ENCODE measurements at regions of chr10 and their contacts with region 1.

Region 1: DNA sequence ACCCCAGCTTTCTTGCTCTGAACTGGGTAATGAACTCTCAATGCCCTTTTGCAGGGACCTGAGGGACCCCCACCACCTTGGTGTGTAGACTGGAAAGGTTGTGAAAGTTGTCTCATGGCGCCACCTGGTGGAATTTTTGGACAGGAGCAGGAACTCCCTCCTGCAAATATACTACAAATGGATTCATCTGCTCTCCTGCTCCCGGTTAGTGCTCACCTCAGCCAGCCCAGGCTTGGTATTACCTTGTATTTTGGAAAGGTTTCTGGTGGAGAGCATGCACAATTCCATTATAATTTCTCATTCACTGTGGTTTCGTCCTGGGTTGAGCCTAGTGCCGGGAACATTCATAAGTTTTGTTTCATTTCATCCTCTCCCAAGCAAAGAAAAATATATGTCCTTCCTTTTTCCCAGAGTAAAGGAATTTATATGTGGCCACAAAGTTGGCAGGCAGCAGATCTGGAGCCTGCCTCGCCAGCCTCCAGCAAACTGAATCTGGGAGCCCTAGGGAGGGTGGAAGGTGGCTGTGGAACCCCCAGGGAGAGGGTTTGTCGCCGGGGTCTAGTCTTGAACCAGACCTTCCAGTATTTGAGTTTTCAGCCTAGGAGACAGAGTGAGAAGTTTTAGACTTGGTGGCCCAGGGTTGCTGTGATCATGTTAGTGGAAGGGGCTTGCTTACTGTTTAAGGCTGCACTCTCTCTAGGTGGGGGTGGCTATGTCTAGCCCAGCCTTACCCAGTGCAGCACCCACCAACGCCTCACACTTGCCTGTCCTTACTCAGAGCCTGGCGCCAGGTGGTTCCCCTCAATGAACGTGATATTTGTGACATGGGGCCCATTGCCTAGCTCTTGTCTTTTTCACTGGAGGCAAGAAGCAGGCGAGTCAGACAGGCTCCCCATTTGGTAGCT is 9.5 kb downstream of the FAM241B start:
- DNase-seq: peak in 4 of 5 donors; percentile 46 to 56 (median 48)
- ATAC-seq: peak in 2 of 4 donors; percentile 60 to 68
- H3K4me3 ChIP-seq: no peak overlapping the region
- H3K27ac ChIP-seq: no peak overlapping the region
- H3K4me1 ChIP-seq: no peaks in the 10 kb centered on the region
- H3K27me3 ChIP-seq: peaks cover 0 to 13% (median 4%) of the 10 kb centered on the region in 9 donors
- CTCF ChIP-seq: peak; percentile 73 to 87 (median 85)
- POLR2A ChIP-seq: no peak

Region 2: DNA sequence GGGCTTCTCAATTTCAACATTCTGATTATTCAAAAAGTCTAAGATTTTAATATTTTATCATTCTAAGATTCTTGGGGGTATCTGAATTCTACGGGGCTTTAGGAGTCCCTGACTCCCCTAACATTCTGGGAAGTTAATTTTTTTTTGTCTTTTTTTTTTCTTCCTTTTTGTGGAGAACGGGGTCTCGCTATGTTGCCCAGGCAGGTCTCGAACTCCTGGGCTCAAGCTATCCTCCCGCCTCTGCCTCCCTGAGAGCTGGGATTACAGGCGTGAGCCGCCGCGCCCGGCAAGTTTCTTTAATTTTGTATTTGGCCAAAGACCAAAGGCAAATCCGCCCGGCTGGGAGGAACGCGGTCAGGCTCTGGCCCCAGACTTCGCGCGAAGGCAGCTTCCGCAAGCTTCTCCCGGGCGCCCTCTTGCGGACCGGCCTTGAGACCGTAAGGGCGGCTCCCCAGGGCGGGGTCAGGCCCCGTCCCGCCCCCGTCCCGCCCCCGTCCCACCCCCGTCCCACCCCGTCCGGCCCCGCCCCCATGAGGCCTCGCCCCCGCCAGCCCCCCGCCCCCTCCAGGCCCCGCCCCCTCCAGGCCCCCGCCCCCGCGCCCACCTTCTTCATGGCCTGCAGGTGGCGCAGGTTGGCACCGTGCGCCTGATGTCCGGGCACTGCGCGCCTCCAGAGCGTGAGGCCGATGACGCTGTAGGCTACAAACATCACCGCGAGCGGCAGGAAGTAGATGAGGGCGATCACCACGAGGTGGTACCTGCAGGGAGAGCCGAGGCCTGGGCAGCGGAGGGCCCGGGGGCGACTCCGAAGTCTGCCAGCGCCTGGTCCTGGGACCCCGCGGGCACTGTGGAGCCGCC is 231.0 kb before region 1 on chr10:
- intact Hi-C with region 1: loop called in 3 of 10 experiments (anchors 2 to 5 kb)
- DNase-seq: peak; percentile 95 to 97 (median 97)
- ATAC-seq: peak; percentile 85 to 90 (median 89)
- H3K4me3 ChIP-seq: peak overlapping the region in 10 of 12 donors; percentile 29 to 61 (median 50)
- H3K27ac ChIP-seq: peak overlapping the region; percentile 47 to 93 (median 86)
- H3K4me1 ChIP-seq: peaks cover 0 to 56% (median 39%) of the 10 kb centered on the region in 12 donors
- H3K27me3 ChIP-seq: no peaks in the 10 kb centered on the region
- CTCF ChIP-seq: peak; percentile 78 to 97 (median 90)
- POLR2A ChIP-seq: peak in 1 of 2 donors; percentile 27

Region 3: GRCh38 chr10:69425511-69426298 is 213.8 kb before region 1 on chr10:
- intact Hi-C with region 1: loop called in 9 of 10 experiments (anchors 5 to 10 kb)
- DNase-seq: no peak
- ATAC-seq: no peak
- H3K4me3 ChIP-seq: no peak overlapping the region
- H3K27ac ChIP-seq: peak overlapping the region in 1 of 12 donors; percentile 74
- H3K4me1 ChIP-seq: peaks cover 0 to 19% (median 0%) of the 10 kb centered on the region in 12 donors
- H3K27me3 ChIP-seq: no peaks in the 10 kb centered on the region
- CTCF ChIP-seq: no peak
- POLR2A ChIP-seq: no peak

Region 4: DNA sequence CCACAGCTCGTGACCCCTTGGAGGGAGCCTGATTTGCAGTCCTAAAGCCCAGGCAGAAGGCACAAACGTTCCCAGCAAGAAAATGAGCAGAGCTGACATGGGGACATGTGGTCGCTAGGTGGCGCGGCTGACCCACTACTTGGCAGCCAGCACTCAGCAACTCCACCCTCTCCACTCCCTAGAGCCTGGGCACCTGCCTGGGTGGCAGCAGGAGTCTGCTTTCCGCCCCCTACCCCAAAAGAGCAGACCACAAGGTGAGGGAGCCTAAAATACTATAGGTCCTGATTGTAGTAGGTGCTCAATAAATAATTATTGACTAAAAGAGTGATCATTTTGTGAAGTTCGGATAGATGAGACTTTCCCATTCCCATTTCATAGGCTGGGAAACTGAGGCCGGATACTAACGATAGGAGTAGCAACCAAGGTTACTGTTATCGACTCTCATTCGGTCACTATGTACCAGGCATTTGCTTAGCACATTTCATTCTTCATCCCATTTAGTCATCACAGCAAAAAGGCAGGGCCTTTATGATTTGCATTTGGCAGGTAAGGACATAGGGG is 123.8 kb before region 1 on chr10:
- intact Hi-C with region 1: loop called (anchors 1 to 5 kb)
- DNase-seq: peak; percentile 50 to 83 (median 61)
- ATAC-seq: peak; percentile 48 to 88 (median 84)
- H3K4me3 ChIP-seq: no peak overlapping the region
- H3K27ac ChIP-seq: no peak overlapping the region
- H3K4me1 ChIP-seq: no peaks in the 10 kb centered on the region
- H3K27me3 ChIP-seq: peaks cover 0 to 4% (median 0%) of the 10 kb centered on the region in 9 donors
- CTCF ChIP-seq: peak; percentile 52 to 87 (median 64)
- POLR2A ChIP-seq: no peak